Activated CD4-positive, alpha-beta T cell treated with anti-CD3 and anti-CD28 coated beads for 36 hours (primary cell): ENCODE measurements at regions of chr11 and their contacts with region 1.

Region 1: GRCh38 chr11:58592760-58593472 is 14.1 kb downstream of the ZFP91 start:
- DNase-seq: peak; percentile 78
- ATAC-seq: peak; percentile 91
- H3K4me3 Mint-ChIP-seq: peak overlapping the region; percentile 0
- H3K27ac Mint-ChIP-seq: peak overlapping the region; percentile 84
- H3K4me1 Mint-ChIP-seq: peaks cover 82% of the 10 kb centered on the region
- H3K27me3 Mint-ChIP-seq: no peaks in the 10 kb centered on the region

Region 2: DNA sequence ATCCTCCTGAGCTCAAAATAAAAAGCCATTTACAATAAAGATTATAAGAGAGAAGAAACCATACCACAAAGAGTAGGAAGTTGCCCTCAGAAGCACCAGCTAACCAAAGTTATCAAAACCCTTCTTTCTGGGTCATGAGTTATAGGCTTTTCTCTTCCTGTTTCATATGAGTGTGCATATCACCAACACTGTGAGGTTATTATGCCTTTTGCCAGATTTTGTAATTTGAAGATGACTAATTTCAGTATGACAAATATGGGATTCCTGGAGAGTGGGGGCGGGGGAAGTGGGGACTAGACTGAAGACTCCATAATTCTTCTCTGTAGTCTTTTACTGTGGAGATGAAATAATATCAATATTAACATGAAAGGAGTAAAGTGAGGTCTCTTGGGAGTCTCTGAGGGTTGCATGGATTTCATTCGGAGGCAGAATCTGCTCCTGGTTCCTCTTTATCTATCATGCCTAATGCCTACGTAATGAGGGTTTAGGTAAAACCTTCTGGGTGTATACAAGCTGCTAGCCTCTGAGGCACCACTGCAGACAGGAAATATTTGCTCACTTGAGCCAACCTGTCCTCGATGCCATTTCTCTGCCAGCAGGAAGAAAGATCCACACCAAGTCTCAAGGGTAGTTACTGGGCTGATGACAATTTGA is 19.3 kb before region 1 on chr11:
- CTCF ChIA-PET with region 1: interaction called, 20 read pairs
- POLR2A ChIA-PET with region 1: interaction called, 23 read pairs
- intact Hi-C with region 1: loop called in 1 of 2 experiments (anchors 1 kb)
- DNase-seq: peak; percentile 84
- ATAC-seq: peak; percentile 26
- H3K4me3 Mint-ChIP-seq: peak overlapping the region; percentile 89
- H3K27ac Mint-ChIP-seq: peak overlapping the region; percentile 96
- H3K4me1 Mint-ChIP-seq: peaks cover 51% of the 10 kb centered on the region
- H3K27me3 Mint-ChIP-seq: no peaks in the 10 kb centered on the region

Region 3: DNA sequence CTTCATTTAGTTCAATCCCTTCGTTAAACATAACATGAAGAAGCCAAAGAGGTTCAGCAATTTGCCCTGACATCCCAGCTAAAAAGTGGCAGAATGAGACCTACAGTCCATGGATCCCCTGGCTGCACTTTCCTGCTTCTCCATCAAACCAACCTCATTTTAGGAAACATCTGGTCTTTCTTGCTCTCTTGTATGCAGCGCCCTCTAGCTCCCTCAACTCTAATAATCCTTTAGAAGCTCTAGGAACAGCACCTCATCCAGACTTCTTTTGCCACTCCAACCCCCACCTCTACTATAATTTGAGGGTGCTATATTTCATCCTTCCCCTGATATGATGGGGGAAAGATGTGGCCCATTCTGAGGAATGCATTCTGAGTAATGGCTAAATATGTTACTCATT is 36.9 kb after region 1 on chr11:
- CTCF ChIA-PET with region 1: interaction called, 16 read pairs
- POLR2A ChIA-PET with region 1: no interaction called
- intact Hi-C with region 1: no loop called
- DNase-seq: peak; percentile 38
- ATAC-seq: no peak
- H3K4me3 Mint-ChIP-seq: no peak overlapping the region
- H3K27ac Mint-ChIP-seq: no peak overlapping the region
- H3K4me1 Mint-ChIP-seq: peaks cover 9% of the 10 kb centered on the region
- H3K27me3 Mint-ChIP-seq: no peaks in the 10 kb centered on the region